AG04449 (cell line): ENCODE measurements at regions of chr2 and their contacts with region 1.

Region 1: GRCh38 chr2:240232961-240233893 is 92.8 kb upstream of the OTOS start:
- DNase-seq: no peak
- H3K4me3 ChIP-seq: peak overlapping the region; percentile 38
- CTCF ChIP-seq: peak; percentile 94

Region 2: GRCh38 chr2:240136013-240136670 is 97.1 kb before region 1 on chr2 and contains the start of gene COPS9:
- CTCF ChIA-PET with region 1: no interaction called
- POLR2A ChIA-PET with region 1: no interaction called
- DNase-seq: peak; percentile 23
- H3K4me3 ChIP-seq: peak within 1 kb of the TSS; percentile 93
- CTCF ChIP-seq: no peak

Region 3: DNA sequence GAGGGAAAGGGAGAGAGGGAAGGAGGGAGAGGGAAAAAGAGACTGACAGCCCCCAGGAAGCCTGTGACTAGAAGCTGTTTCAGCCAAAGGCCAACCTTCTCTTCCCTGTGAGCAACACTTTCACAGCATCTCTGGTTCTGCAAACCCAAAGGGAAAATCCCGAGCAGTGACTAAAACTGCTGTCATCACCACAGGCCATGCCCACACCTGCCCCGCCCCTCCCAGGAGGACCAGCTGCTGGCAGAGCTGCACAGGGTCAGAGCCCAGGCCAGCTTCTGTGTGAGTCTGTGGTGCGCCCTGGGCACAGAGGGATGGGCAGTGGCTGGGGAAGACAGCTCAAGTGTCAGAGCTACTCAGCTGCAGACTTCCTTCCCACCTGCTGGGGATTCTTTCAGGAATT is 27.9 kb before region 1 on chr2:
- CTCF ChIA-PET with region 1: interaction called, 11 read pairs
- POLR2A ChIA-PET with region 1: no interaction called
- DNase-seq: no peak
- H3K4me3 ChIP-seq: no peak overlapping the region
- CTCF ChIP-seq: no peak

Region 4: GRCh38 chr2:240220371-240220770 is 12.9 kb before region 1 on chr2:
- CTCF ChIA-PET with region 1: interaction called, 33 read pairs
- POLR2A ChIA-PET with region 1: no interaction called
- DNase-seq: peak; percentile 28
- H3K4me3 ChIP-seq: no peak overlapping the region
- CTCF ChIP-seq: no peak

Region 5: DNA sequence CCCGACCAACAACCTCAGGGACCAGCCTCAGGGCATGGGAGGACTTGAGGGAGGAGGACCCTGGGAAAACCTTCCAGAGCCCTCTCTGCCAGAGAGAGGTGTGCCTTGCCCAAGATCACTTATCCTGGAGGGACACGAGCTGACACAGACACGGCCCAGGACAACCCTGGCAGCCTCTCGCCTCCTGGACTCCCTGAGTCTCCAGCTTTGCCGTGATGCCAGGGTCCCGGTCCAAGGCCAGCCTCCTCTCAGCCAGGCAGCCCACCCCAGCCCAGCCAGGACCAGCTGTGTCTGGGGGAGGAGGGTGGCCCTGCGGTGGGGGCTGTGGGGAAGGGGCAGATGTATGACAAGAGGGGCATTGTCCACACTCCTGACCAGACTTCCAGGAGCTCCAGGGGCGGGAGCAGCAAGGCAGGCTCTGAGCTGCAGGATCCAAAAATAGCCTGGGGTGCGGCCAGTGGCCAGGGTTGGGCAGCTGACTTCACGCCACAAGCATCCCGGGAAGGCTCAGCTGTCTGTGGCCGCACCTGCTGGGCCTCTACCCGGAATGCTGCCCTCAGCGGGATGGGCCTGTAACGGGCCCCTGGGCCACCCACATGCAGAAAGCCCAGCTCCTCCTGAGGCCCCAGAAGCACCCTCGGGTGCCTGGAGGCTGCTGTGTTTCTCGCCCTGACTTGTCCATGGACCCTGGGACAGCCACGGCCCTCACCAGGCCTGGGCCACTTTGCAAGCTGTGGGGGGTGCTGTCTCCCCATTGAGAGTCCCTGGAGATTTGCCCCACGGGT is 136.8 kb after region 1 on chr2:
- CTCF ChIA-PET with region 1: interaction called, 12 read pairs
- POLR2A ChIA-PET with region 1: interaction called, 3 read pairs
- DNase-seq: peak; percentile 76
- H3K4me3 ChIP-seq: no peak overlapping the region; the same call in 1 of the 2 replicates
- CTCF ChIP-seq: peak; percentile 3

Region 6: GRCh38 chr2:240434728-240435456 is 201.7 kb after region 1 on chr2:
- CTCF ChIA-PET with region 1: interaction called, 130 read pairs
- POLR2A ChIA-PET with region 1: interaction called, 3 read pairs
- DNase-seq: no peak
- H3K4me3 ChIP-seq: peak overlapping the region; percentile 66
- CTCF ChIP-seq: no peak

Region 7: GRCh38 chr2:240499309-240500301 is 266.4 kb after region 1 on chr2:
- CTCF ChIA-PET with region 1: interaction called, 31 read pairs
- POLR2A ChIA-PET with region 1: no interaction called
- DNase-seq: no peak
- H3K4me3 ChIP-seq: no peak overlapping the region
- CTCF ChIP-seq: no peak